Activated B cell treated with CpG ODN at 0.5 μM for 24 hours (primary cell): ENCODE measurements at regions of chr10 and their contacts with region 1.

Region 1: GRCh38 chr10:35635576-35635975 is 6.5 kb downstream of the FZD8 start:
- DNase-seq: no peak
- ATAC-seq: peak; percentile 66
- H3K4me3 Mint-ChIP-seq: no peak overlapping the region
- H3K27ac Mint-ChIP-seq: no peak overlapping the region
- H3K4me1 Mint-ChIP-seq: peaks cover 9% of the 10 kb centered on the region
- H3K27me3 Mint-ChIP-seq: peaks cover 36% of the 10 kb centered on the region
- CTCF ChIP-seq: no peak

Region 2: DNA sequence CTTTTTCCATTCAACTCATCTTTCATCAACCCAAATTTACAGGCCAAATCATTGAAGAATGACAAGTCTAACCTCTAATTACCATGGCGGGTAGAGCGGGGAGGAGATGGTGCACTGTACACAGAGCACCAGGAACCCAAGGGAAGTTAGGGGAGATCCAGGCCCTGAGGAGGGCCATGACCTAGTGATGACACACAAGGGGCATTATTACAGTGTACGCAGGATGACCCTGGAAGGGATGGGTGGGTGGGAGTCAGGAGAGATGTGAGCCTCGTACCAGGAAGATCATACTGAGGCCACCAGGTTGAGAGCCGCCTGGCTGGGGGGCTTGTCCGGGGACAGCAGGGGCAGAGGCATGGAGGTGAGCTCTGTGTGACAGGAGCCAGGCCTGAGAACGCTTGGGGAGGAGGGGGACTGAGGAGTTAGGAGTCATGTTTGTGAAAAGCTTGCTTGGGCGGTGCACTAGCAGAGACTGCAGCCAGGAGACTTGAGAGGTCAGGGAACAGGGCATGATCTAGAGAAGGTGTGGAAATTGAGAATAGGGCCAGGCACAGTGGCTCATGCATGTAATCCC is 388.7 kb before region 1 on chr10:
- CTCF ChIA-PET with region 1: no interaction called
- POLR2A ChIA-PET with region 1: no interaction called
- intact Hi-C with region 1: loop called (anchors 10 kb)
- DNase-seq: no peak
- ATAC-seq: no peak
- H3K4me3 Mint-ChIP-seq: no peak overlapping the region
- H3K27ac Mint-ChIP-seq: no peak overlapping the region
- H3K4me1 Mint-ChIP-seq: no peaks in the 10 kb centered on the region
- H3K27me3 Mint-ChIP-seq: peaks cover 5% of the 10 kb centered on the region
- CTCF ChIP-seq: no peak

Region 3: GRCh38 chr10:36606234-36606839 is 970.8 kb after region 1 on chr10:
- CTCF ChIA-PET with region 1: no interaction called
- POLR2A ChIA-PET with region 1: no interaction called
- intact Hi-C with region 1: loop called (anchors 1 kb)
- DNase-seq: no peak
- ATAC-seq: no peak
- H3K4me3 Mint-ChIP-seq: no peak overlapping the region
- H3K27ac Mint-ChIP-seq: no peak overlapping the region
- H3K4me1 Mint-ChIP-seq: no peaks in the 10 kb centered on the region
- H3K27me3 Mint-ChIP-seq: no peaks in the 10 kb centered on the region
- CTCF ChIP-seq: no peak

Region 4: DNA sequence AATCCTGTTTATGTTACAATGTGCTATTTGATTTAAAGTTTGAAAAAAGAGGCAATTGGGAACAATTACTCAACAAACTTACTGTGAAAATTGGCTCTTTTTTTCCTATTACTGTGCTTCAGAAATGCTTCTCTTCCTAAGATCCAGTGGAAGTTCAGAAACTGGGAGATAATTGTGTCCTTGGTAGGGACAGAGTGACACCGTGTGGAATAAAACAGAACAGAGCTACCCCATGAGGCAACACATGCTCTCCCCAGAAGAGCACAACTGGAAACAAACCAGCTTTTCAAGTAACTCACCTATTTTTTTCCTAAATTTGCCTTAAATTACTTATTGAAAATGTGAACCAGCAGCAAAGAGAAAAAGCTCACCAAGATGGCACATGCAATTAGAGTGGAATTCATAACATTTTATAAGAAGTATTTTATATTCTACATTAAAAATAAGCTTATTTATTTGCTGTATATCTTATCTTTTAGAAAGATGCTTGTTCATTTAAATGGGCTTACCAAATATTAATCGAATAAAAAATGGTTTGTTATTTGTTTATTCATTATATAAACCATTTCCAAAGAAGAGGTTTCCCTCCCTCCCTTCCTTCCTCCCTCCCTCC is 1143.8 kb after region 1 on chr10:
- CTCF ChIA-PET with region 1: interaction called, 12 read pairs
- POLR2A ChIA-PET with region 1: no interaction called
- intact Hi-C with region 1: loop called (anchors 1 kb)
- DNase-seq: no peak
- ATAC-seq: no peak
- H3K4me3 Mint-ChIP-seq: no peak overlapping the region
- H3K27ac Mint-ChIP-seq: no peak overlapping the region
- H3K4me1 Mint-ChIP-seq: no peaks in the 10 kb centered on the region
- H3K27me3 Mint-ChIP-seq: peaks cover 1% of the 10 kb centered on the region
- CTCF ChIP-seq: no peak

Region 5: GRCh38 chr10:37495415-37495814 is 1859.8 kb after region 1 on chr10:
- CTCF ChIA-PET with region 1: interaction called, 3 read pairs
- POLR2A ChIA-PET with region 1: no interaction called
- intact Hi-C with region 1: loop called (anchors 5 kb)
- DNase-seq: no peak
- ATAC-seq: no peak
- H3K4me3 Mint-ChIP-seq: no peak overlapping the region
- H3K27ac Mint-ChIP-seq: no peak overlapping the region
- H3K4me1 Mint-ChIP-seq: no peaks in the 10 kb centered on the region
- H3K27me3 Mint-ChIP-seq: no peaks in the 10 kb centered on the region
- CTCF ChIP-seq: no peak